Heart right ventricle (tissue), 16 donors: ENCODE measurements at regions of chr4 and their contacts with region 1.

Region 1: DNA sequence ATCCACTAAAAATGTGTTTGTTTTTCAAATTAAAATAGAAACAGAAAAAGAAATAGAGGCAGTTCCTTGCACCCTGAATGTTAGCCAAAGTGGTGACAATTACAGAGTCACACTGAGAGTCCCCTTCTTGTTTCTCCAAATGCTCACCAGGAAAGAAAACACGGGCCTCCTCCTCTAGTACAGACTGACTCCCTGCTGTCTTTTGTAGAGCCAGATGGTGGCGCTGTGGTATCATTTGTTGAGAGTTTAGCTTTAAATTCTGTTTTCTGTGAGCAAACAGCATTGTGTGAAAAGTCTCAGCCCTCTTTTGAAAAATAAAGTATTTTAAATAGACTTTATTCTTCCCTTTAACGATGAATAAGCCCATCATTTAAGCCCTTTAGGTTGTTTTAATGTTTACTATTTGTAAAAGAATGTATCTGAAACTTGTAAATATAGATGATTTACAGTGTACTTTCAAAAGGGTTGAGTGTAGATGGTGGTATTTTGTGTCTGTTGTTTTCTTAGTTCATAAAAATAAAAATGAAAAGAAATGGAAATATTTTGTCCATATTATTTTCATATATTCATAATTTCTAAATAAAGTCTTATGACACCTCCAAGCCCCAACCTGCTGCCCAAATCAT is 36.9 kb upstream of the ATOH1 start:
- DNase-seq: peak in 1 of 2 donors; percentile 30
- ATAC-seq: peak in 4 of 8 donors; percentile 47 to 58 (median 52)
- H3K4me3 ChIP-seq: no peak overlapping the region
- H3K27ac ChIP-seq: no peak overlapping the region
- H3K4me1 ChIP-seq: no peaks in the 10 kb centered on the region
- H3K27me3 ChIP-seq: peaks cover 0 to 11% (median 0%) of the 10 kb centered on the region in 7 donors
- CTCF ChIP-seq: peak; percentile 49 to 81 (median 74)

Region 2: DNA sequence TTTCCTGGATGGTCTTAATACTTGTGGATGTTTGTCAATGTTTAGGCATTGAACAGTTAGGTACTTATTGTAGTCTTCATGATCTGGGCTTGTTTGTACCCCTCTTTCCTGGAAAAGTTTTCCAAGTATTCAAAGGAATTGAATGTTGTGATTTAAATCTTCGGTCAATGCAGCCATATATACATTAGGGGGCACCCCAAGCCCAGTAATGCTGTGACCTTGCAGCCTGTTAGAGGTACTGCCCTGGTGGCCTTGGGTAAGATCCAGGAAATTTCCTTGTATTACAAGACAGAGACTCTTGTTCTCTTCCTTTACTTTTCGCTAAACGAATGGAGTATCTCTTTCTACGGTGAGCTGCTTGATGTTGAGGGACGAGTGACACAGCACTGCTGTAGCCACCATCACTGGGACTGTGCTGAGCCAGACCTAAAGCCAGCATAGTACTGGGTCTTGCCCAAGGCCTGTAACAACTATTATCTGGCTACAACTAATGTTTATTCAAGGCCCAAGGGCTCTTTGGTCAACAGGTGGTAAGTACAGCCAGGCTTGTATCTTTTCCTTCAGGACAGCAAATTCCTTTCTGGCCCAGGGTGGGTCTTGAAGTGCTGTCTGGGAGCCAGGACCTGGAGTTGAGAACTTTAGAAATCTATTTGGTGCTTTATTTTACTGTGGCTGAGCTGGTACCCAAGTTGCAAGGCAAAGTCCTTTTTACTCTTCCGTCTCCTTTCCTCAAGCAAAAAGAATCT is 81.4 kb before region 1 on chr4:
- intact Hi-C with region 1: no loop called
- DNase-seq: no peak
- ATAC-seq: no peak
- H3K4me3 ChIP-seq: no peak overlapping the region
- H3K27ac ChIP-seq: no peak overlapping the region
- H3K4me1 ChIP-seq: no peaks in the 10 kb centered on the region
- H3K27me3 ChIP-seq: no peaks in the 10 kb centered on the region
- CTCF ChIP-seq: no peak

Region 3: DNA sequence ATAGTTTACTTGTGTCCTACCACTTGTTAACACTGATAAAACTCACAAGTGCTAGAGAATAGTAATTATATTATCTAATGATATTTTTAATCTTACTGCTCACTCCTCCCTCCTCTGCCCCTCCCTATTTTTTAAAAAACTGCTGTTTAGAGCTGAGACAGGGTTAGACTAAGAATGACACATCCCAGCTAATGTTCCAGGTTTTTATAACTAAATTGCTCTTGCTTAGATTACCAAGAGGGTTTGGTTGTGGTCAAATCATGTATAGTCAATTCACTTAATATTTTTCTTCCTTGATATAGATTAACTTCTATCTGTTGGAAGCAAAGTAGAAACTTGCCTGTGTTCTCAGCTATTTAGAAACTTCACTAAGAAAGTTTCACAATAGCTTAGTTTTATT is 97.1 kb after region 1 on chr4:
- intact Hi-C with region 1: no loop called
- DNase-seq: no peak
- ATAC-seq: no peak
- H3K4me3 ChIP-seq: no peak overlapping the region
- H3K27ac ChIP-seq: no peak overlapping the region
- H3K4me1 ChIP-seq: no peaks in the 10 kb centered on the region
- H3K27me3 ChIP-seq: no peaks in the 10 kb centered on the region
- CTCF ChIP-seq: no peak

Region 4: DNA sequence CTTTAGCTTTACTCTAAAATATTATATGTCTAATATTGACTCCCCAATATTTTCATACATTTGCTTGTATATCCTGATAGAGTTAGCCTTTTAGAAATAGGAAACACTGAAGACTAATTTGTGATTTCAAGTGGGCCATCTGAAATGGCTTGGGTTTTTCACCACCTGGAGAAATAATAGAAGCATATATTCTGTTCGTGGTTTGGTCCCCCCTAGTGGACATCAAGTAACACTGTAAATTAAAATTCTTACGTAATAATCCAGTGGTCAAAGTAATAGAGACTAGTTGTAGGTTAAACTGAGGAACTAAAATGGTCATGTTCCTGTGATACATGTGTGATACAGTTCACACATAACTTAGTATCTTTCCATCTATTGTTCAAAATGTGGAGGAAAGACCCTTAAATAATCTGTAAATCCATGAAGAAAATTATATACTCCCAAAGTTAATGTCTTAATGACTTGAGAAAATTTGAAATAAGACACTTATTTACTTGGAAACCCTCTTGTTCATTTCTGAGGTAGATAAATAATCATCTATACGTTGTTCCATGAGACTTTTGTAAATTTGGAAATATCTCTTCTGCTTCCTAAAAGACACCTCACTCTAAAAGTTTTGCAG is 336.1 kb after region 1 on chr4:
- intact Hi-C with region 1: loop called (anchors 5 to 10 kb)
- DNase-seq: no peak
- ATAC-seq: no peak
- H3K4me3 ChIP-seq: no peak overlapping the region
- H3K27ac ChIP-seq: no peak overlapping the region
- H3K4me1 ChIP-seq: no peaks in the 10 kb centered on the region
- H3K27me3 ChIP-seq: peaks cover 0 to 6% (median 0%) of the 10 kb centered on the region in 7 donors
- CTCF ChIP-seq: peak in 8 of 9 donors; percentile 14 to 61 (median 56)

Region 5: DNA sequence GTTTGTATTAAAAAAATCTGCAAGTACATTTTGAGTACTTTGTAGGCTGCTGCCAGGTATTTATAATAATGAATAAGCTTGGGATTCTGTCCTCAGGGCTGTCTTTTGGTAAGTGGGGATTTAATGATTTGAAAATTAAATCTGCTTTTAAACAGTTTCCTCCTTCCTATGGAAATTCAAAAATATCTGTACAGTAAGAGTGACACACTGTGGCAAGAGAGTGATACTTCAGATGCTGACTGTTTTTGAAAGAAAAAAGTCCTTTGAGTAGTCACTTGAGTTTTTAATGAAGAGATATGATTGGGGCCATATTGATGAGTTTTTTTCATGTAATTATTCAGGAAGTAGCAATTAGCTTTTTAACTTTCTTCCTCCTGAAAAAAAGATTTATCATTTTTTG is 465.1 kb after region 1 on chr4:
- intact Hi-C with region 1: loop called in 4 of 10 experiments (anchors 5 kb)
- DNase-seq: no peak
- ATAC-seq: no peak
- H3K4me3 ChIP-seq: no peak overlapping the region
- H3K27ac ChIP-seq: no peak overlapping the region
- H3K4me1 ChIP-seq: no peaks in the 10 kb centered on the region
- H3K27me3 ChIP-seq: no peaks in the 10 kb centered on the region
- CTCF ChIP-seq: peak in 6 of 9 donors; percentile 21 to 42 (median 32)